Posterior cingulate gyrus (tissue), 11 donors: ENCODE measurements at regions of chr2 and their contacts with region 1.

Region 1: DNA sequence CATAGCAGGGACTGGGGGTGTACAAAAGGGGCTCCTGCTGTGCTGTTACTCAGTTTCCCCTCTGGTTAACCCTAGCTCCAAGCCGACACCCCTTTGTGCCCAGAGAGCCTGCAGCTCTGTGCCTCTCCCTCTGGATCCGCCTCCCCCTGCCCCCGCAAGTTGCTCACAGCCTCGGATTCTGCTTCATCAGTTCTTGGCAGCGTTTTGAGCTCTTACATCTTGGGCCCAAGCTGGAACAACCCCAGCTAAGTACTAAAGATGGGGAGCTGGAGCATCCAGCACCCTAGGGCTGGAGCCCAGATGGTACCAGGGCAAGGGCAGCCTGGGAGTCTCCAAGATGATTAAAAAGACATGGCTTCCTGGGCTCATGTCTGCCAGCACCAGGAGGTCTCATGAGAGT is 40.7 kb downstream of the POMC start:
- DNase-seq: peak in 2 of 10 donors; percentile 29 to 77

Region 2: GRCh38 chr2:24959761-24960160 is 167.9 kb before region 1 on chr2:
- intact Hi-C with region 1: no loop called
- DNase-seq: no peak

Region 3: DNA sequence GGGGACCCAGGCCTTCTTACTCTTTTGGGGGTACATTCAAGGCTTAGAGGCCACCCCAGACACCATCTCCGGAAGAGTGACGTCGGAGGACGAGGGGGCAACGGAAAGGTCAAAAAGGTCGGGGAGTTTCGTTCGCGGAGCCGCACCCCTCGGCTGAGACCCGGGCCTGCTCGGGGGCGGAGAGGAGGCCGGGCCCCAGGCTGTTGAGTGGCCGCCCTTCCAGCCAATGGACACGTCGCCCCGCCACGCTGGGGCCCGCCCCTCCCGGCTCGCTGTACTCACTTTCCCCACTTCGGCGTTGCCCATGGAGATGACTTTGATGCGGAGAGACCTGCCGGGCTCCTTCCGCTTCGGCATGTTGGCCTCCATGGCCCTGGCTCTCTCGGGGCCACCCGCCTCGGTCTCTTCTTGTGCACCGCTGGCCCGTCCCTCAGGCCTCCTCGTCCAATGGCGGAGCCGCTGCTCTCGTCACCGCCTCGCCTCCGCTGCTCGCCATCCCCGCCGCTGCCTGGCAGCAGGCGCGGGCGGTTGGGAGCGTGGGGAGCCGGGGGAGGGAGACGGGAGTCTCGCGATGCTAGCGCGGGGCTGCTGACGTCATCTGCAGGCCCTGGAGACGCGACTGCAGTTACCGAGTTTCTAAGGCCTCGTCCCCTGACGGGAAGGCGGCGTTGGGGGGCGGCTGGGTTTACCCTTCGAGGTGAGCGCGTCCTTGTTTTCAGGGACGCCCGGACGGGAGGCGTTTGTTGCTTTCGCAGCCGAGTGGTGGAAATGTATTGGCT is 155.9 kb before region 1 on chr2 and contains the start of gene DNAJC27:
- intact Hi-C with region 1: loop called (anchors 1 kb)
- DNase-seq: peak; percentile 94 to 100 (median 98)

Region 4: GRCh38 chr2:25041928-25042320 is 85.7 kb before region 1 on chr2 and contains the start of gene EFR3B:
- intact Hi-C with region 1: loop called (anchors 1 kb)
- DNase-seq: peak; percentile 90 to 99 (median 95)

Region 5: DNA sequence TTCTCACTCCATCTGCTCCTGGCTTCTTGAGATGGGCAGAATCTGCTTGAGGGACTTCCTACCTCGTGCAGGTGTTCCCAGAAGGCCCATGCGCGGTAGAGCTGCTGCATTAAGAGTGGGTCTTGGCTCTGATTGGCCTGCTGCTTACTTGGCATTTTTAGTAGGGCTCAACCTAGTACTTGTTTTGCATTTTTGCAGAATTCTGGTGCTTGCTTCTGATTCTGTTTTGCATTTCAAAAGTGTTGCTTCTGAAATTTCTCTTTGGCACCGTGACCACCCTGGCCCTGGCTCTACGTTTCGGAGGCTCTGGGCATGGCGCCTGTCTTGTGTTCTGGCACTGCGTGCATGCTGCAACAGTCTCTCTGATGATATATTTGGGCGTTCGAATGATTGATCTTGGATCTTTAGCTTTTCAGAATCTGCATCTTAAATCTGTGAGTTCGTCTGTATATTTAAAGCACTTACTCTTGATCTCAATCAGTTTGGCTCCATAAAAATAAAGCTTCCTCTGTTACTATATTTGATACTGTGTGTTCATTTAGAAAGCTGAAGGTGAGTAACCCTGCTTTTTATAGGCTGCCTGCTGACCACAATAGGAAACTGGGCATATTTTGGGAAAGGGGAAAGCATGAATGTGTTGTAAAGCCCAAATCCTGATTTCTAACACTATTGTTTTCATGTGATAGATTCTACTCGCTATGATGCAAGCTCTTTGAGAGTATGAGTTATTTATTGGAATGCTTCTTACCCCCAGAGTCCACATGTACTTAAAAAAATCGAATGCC is 63.6 kb before region 1 on chr2:
- intact Hi-C with region 1: loop called (anchors 5 kb)
- DNase-seq: peak; percentile 56 to 95 (median 74)